ENCODE measurements at regions of chr10 and their contacts with region 1.

Region 1: GRCh38 chr10:120942806-120943413 is 91.7 kb downstream of the WDR11 start:
- DNase-seq: peak; percentile 80
- ATAC-seq: peak; percentile 97
- H3K4me3 Mint-ChIP-seq: no peak overlapping the region
- H3K27ac Mint-ChIP-seq: no peak overlapping the region
- H3K4me1 Mint-ChIP-seq: peaks cover 3% of the 10 kb centered on the region
- H3K27me3 Mint-ChIP-seq: peaks cover 22% of the 10 kb centered on the region
- CTCF ChIP-seq: peak; percentile 82

Region 2: GRCh38 chr10:120770496-120770895 is 172.4 kb before region 1 on chr10:
- CTCF ChIA-PET with region 1: no interaction called
- POLR2A ChIA-PET with region 1: no interaction called
- intact Hi-C with region 1: no loop called
- DNase-seq: no peak
- ATAC-seq: no peak
- H3K4me3 Mint-ChIP-seq: no peak overlapping the region
- H3K27ac Mint-ChIP-seq: no peak overlapping the region
- H3K4me1 Mint-ChIP-seq: no peaks in the 10 kb centered on the region
- H3K27me3 Mint-ChIP-seq: peaks cover 8% of the 10 kb centered on the region
- CTCF ChIP-seq: no peak

Region 3: DNA sequence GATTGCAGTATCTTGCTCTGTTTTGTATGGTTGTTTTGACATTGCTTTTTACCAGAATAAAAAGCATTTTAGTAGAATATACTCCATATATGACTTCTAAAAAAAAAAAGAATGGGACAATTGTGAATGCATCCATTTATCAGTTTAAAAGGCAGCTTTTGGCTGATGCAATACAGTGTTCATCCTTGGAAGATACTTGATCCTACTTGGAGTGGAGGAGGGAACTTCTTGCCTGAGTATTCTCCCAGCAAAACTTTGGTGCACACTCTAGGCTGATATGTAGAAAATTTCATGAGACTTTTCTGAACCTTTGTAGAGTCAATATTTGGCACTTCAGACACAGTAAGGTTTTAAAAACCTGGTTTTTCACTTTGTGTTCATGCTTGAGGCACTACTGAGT is 51.5 kb before region 1 on chr10:
- CTCF ChIA-PET with region 1: no interaction called
- POLR2A ChIA-PET with region 1: no interaction called
- intact Hi-C with region 1: no loop called
- DNase-seq: no peak
- ATAC-seq: no peak
- H3K4me3 Mint-ChIP-seq: no peak overlapping the region
- H3K27ac Mint-ChIP-seq: no peak overlapping the region
- H3K4me1 Mint-ChIP-seq: no peaks in the 10 kb centered on the region
- H3K27me3 Mint-ChIP-seq: no peaks in the 10 kb centered on the region
- CTCF ChIP-seq: no peak

Region 4: DNA sequence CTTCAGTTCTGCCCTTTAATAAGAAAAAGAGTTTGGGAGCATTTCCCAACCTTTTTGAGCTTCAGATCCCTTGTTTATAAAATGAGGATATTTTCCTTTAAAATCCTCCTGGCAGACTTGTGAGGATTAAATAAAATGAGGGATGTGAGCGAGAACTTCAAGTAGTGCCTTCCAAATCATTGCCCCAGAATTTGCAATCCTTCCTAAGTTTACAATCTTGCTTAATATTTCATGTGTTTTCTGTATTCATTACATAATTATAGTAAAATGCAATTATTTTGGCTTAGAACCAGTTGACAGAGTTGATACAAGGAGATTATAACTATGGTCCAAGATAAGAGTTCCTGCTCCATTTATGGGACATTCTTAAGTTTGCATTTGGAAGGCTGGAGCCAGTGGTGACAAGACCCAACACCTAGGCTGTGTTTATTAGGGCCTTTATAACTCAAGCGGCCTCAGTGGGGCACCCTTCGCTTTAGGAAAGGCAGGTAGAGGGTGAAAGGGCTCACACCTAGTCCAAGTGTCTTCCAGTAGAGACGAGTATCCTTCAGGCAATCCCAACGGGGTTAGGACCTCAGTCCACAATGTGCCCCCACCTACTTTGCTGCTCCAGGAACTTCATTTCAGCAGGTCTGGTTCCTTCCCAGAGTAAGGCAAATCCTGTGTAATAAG is 225.8 kb after region 1 on chr10:
- CTCF ChIA-PET with region 1: no interaction called
- POLR2A ChIA-PET with region 1: no interaction called
- intact Hi-C with region 1: no loop called
- DNase-seq: no peak
- ATAC-seq: no peak
- H3K4me3 Mint-ChIP-seq: no peak overlapping the region
- H3K27ac Mint-ChIP-seq: no peak overlapping the region
- H3K4me1 Mint-ChIP-seq: no peaks in the 10 kb centered on the region
- H3K27me3 Mint-ChIP-seq: peaks cover 1% of the 10 kb centered on the region
- CTCF ChIP-seq: no peak

Region 5: GRCh38 chr10:121734589-121735045 is 791.7 kb after region 1 on chr10:
- CTCF ChIA-PET with region 1: interaction called, 4 read pairs
- POLR2A ChIA-PET with region 1: no interaction called
- intact Hi-C with region 1: loop called (anchors 10 kb)
- DNase-seq: peak; percentile 22
- ATAC-seq: no peak
- H3K4me3 Mint-ChIP-seq: no peak overlapping the region
- H3K27ac Mint-ChIP-seq: no peak overlapping the region
- H3K4me1 Mint-ChIP-seq: peaks cover 14% of the 10 kb centered on the region
- H3K27me3 Mint-ChIP-seq: peaks cover 29% of the 10 kb centered on the region
- CTCF ChIP-seq: peak; percentile 84